Ovary (tissue), 10 donors: ENCODE measurements at regions of chr2 and their contacts with region 1.

Region 1: DNA sequence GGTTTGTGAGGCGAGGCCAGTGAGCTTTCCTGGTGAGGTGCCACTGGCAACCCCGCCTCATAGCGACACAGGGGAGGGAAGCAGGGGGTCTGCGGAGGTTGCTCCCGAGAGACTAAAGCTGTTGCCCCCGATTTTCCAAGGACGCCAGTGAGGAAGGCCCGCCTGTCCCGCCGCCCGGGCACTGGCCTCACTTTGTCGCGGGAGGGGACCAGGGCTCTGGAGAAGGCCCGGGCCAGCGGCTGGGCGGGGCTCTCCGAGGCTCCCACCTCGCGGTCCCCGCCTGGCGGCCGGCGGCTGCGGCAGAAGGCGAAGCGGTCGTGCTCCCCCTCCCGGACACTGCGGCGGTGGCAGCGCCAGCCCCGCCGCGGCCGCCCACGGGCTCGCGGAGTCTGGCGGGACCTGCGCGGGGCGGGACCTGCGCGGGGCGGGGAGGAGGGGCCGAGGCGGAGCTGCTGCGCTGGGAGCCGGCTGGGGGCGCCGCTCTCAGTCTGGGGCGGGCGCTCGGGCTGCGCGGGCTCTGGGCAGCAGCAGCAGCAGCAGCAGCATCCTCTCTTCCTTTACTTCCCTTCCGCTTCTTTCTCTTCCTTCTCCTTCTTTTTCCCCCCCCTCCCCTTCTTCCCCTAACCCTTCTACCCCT is at the start of gene MAP2:
- DNase-seq: peak; percentile 80 to 91 (median 85)
- H3K4me3 ChIP-seq: peak within 1 kb of the TSS; percentile 31
- H3K27ac ChIP-seq: peak within 1 kb of the TSS in 1 of 2 donors; percentile 4
- H3K4me1 ChIP-seq: peaks cover 2% of the 10 kb centered on the region
- H3K27me3 ChIP-seq: no peaks in the 10 kb centered on the region
- CTCF ChIP-seq: peak; percentile 78 to 97 (median 96)
- EP300 ChIP-seq: no peak
- POLR2A ChIP-seq: no peak
- total RNA-seq, gene MAP2: 6.0 to 23.9 (median 9.6) TPM

Region 2: DNA sequence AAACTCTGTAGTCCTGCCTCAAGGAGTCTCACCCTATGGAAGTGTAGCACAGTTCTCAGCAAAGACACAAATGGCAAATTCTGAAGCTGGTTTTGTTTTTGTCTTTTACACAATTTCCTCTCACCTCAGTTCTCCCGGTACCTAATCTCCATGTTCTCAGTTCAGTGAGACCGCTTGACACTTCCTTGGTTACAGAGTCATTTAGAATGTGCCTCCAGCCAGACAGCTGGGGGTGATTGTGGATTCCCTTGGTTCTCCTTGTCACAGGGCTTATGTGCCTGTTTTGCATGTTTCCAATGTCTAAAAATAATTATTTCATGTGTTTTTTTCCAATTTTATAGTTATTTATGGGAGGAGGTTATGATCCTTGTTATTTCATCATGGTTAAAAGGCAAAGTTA is 379.4 kb before region 1 on chr2:
- intact Hi-C with region 1: no loop called
- DNase-seq: no peak
- H3K4me3 ChIP-seq: no peak overlapping the region
- H3K27ac ChIP-seq: no peak overlapping the region
- H3K4me1 ChIP-seq: no peaks in the 10 kb centered on the region
- H3K27me3 ChIP-seq: no peaks in the 10 kb centered on the region
- CTCF ChIP-seq: no peak
- EP300 ChIP-seq: no peak
- POLR2A ChIP-seq: no peak

Region 3: DNA sequence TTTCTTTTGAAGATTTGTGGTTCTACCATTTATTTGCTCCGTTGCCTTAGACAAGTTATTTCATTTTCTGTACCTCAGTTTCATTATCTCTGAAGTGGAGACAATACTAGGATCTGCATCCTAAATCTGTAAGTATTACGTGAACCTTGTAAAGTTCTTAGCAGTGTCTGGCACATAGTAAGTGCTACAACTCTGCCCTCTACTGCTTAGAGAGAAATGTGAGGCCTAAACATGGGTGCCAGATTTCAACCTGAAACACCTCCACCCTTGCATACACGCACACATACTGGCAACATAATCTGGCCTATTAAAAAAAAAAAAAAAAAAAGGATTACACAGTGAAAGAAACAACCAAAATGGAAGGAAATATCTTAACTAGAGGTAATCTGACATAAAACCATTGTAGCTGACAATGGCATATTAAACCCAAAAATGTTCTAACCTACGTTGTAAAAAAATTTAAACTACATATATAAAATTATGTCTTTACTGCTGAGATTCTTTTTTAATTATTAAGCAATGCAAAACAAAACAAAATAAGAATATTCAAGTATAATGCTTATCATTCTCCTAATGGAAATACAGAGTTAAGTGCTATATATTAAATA is 132.8 kb after region 1 on chr2:
- intact Hi-C with region 1: loop called in 1 of 4 experiments (anchors 10 kb)
- DNase-seq: no peak
- H3K4me3 ChIP-seq: no peak overlapping the region
- H3K27ac ChIP-seq: no peak overlapping the region
- H3K4me1 ChIP-seq: no peaks in the 10 kb centered on the region
- H3K27me3 ChIP-seq: no peaks in the 10 kb centered on the region
- CTCF ChIP-seq: no peak
- EP300 ChIP-seq: no peak
- POLR2A ChIP-seq: no peak